PC-9 (cell line): ENCODE measurements at regions of chr12 and their contacts with region 1.

Region 1: DNA sequence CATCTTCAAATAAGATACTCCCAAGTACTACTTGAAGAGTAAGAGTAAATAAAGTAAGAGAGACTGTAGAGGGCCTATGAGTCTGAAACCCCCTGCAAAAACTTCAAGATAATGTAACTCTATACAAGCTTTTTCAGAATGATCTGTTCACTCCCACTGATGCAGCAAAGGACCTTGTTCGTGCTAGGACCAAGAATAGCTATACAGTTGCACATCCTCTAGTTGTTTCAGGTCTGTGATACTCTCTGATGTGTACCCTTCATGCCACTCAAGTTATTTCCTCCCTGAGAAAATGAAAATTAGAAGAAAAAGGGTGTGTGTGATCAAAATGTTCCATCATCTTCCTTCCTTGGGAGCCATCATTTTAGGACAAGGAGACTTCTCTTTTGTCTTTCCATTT is 204.4 kb downstream of the ALX1 start:
- DNase-seq: no peak
- H3K4me3 ChIP-seq: no peak overlapping the region
- H3K27ac ChIP-seq: no peak overlapping the region
- H3K4me1 ChIP-seq: no peaks in the 10 kb centered on the region
- H3K27me3 ChIP-seq: no peaks in the 10 kb centered on the region
- CTCF ChIP-seq: no peak

Region 2: GRCh38 chr12:84727964-84728363 is 756.4 kb before region 1 on chr12:
- CTCF ChIA-PET with region 1: no interaction called
- POLR2A ChIA-PET with region 1: no interaction called
- intact Hi-C with region 1: no loop called
- DNase-seq: peak; percentile 36 to 52
- H3K4me3 ChIP-seq: no peak overlapping the region
- H3K27ac ChIP-seq: no peak overlapping the region
- H3K4me1 ChIP-seq: 0 out of 2 replicates have a peak, but pooled peaks cover 3% of the 10 kb centered on the region
- H3K27me3 ChIP-seq: no peaks in the 10 kb centered on the region
- CTCF ChIP-seq: no peak

Region 3: GRCh38 chr12:85575120-85576096 is 91.0 kb after region 1 on chr12:
- CTCF ChIA-PET with region 1: no interaction called
- POLR2A ChIA-PET with region 1: no interaction called
- intact Hi-C with region 1: loop called (anchors 5 kb)
- DNase-seq: peak; percentile 33 to 40
- H3K4me3 ChIP-seq: no peak overlapping the region
- H3K27ac ChIP-seq: no peak overlapping the region
- H3K4me1 ChIP-seq: no peaks in the 10 kb centered on the region
- H3K27me3 ChIP-seq: no peaks in the 10 kb centered on the region
- CTCF ChIP-seq: peak; percentile 74

Region 4: DNA sequence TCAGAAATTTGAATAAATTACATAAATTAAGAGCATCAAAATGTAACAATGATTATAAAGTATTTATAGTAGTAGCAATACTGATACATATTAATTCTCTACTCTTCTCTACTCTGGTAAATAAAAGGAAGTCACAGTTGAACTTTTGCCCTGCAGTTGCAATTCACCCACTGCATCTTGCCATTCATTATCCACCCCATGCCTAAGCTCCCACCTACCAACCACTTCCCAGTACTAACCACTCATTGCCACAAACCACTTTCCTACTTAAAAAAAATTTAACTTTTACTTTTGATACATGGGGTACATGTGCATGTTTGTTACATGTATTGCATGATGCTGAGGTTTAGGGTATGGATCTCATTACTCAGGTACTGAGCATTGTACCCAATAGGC is 177.8 kb after region 1 on chr12:
- CTCF ChIA-PET with region 1: no interaction called
- POLR2A ChIA-PET with region 1: no interaction called
- intact Hi-C with region 1: no loop called
- DNase-seq: no peak
- H3K4me3 ChIP-seq: no peak overlapping the region
- H3K27ac ChIP-seq: no peak overlapping the region
- H3K4me1 ChIP-seq: no peaks in the 10 kb centered on the region
- H3K27me3 ChIP-seq: no peaks in the 10 kb centered on the region
- CTCF ChIP-seq: no peak